Posterior vena cava (tissue), 2 donors: ENCODE measurements at regions of chr2 and their contacts with region 1.

Region 1: GRCh38 chr2:154549869-154550268 is 148.6 kb upstream of the KCNJ3 start:
- DNase-seq: no peak

Region 2: DNA sequence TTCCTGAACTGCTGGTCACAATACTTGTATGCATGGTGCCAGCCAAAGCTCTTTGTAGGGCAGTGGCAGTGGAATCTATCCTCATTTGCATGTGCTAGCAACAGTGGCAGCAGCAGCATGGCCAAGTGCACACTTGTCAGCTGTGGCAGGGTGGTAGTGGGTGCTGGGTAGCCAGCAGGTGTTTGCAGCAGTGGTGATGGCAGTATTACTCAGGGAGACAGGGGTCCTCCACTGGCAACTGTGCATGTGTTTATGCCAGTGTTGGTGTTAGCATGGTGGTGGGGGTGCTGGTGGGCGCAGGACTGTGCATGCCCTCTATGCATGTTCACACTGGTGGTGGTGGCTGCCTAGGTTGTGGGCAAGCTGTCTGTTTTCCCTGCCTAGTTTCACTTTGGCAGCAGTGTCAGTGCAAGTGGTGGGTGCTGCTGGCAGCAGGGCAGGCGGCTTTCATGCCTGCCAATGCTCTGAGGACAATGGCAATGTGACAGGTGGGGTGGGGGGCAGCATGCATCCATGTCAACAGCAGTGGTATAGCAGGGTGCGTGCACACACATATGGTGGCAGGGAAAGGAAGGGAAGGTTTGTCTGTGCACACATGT is 637.0 kb before region 1 on chr2:
- intact Hi-C with region 1: loop called in 1 of 2 experiments (anchors 5 kb)
- DNase-seq: no peak

Region 3: GRCh38 chr2:154527962-154528361 is 21.9 kb before region 1 on chr2:
- intact Hi-C with region 1: loop called in 1 of 2 experiments (anchors 1 kb)
- DNase-seq: no peak

Region 4: GRCh38 chr2:154697418-154698252 is 147.8 kb after region 1 on chr2:
- intact Hi-C with region 1: loop called in 1 of 2 experiments (anchors 10 kb)
- DNase-seq: peak; percentile 85

Region 5: DNA sequence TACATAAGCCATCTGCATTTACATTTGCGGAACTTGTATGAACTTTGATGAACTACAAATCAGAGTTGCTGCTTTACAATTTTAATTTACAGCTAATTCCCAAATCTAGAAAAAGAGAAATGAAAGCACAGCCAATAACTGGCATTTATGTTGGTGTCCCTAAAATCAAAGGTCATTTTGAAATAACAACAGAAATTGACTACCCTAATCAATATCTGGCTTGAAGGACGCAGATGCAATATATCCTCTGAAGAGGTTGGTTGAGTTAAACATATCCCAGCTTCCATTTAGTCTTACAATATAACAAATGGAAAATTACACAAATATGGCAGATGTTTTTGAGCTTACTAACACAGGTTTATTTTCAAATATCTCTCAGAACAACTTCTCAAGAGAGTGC is 326.1 kb after region 1 on chr2:
- intact Hi-C with region 1: no loop called
- DNase-seq: no peak